Heart right ventricle (tissue), 16 donors: ENCODE measurements at regions of chr7 and their contacts with region 1.

Region 1: GRCh38 chr7:32070406-32071360 is at the start of gene PDE1C:
- DNase-seq: peak; percentile 75 to 78
- ATAC-seq: peak; percentile 78 to 93 (median 83)
- H3K4me3 ChIP-seq: peak within 1 kb of the TSS; percentile 44 to 70 (median 58)
- H3K27ac ChIP-seq: peak within 1 kb of the TSS; percentile 82 to 94 (median 90)
- H3K4me1 ChIP-seq: peaks cover 3 to 50% (median 27%) of the 10 kb centered on the region in 9 donors
- H3K27me3 ChIP-seq: peaks cover 0 to 48% (median 4%) of the 10 kb centered on the region in 7 donors
- CTCF ChIP-seq: no peak
- total RNA-seq, gene PDE1C: 124 to 315 (median 197) TPM

Region 2: GRCh38 chr7:32147546-32148268 is 77.0 kb after region 1 on chr7:
- intact Hi-C with region 1: loop called in 4 of 10 experiments (anchors 2 to 10 kb)
- DNase-seq: no peak
- ATAC-seq: no peak
- H3K4me3 ChIP-seq: no peak overlapping the region
- H3K27ac ChIP-seq: peak overlapping the region in 1 of 10 donors; percentile 63
- H3K4me1 ChIP-seq: peaks cover 0 to 41% (median 11%) of the 10 kb centered on the region in 9 donors
- H3K27me3 ChIP-seq: no peaks in the 10 kb centered on the region
- CTCF ChIP-seq: no peak

Region 3: DNA sequence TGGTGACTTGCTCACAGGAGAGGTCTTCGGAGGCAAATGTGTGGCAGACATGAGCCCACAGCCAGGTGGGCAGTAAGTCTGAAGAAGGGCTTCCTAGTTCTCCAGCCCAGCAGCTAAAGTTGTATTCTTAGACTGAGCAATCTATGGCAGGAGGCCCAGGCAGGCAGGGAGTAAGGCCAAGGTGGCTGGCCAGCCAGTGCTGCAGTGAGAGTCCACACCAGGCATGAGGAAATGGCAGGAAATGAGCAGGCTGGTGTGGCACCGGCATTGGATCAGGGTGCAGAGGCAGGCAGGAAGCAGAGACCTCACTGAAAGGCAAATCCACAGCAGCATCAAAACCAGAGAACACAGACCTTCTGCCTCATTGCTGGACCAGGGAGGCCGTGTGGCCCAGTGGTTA is 84.1 kb after region 1 on chr7:
- intact Hi-C with region 1: loop called in 6 of 10 experiments (anchors 2 to 10 kb)
- DNase-seq: peak; percentile 67 to 76
- ATAC-seq: peak; percentile 56 to 89 (median 84)
- H3K4me3 ChIP-seq: no peak overlapping the region
- H3K27ac ChIP-seq: peak overlapping the region in 9 of 10 donors; percentile 11 to 87 (median 81)
- H3K4me1 ChIP-seq: peaks cover 0 to 76% (median 40%) of the 10 kb centered on the region in 9 donors
- H3K27me3 ChIP-seq: no peaks in the 10 kb centered on the region
- CTCF ChIP-seq: no peak

Region 4: GRCh38 chr7:32164346-32164957 is 93.8 kb after region 1 on chr7:
- intact Hi-C with region 1: loop called in 7 of 10 experiments (anchors 5 to 10 kb)
- DNase-seq: peak in 1 of 2 donors; percentile 50
- ATAC-seq: peak; percentile 36 to 80 (median 76)
- H3K4me3 ChIP-seq: no peak overlapping the region
- H3K27ac ChIP-seq: peak overlapping the region in 7 of 10 donors; percentile 51 to 88 (median 75)
- H3K4me1 ChIP-seq: peaks cover 9 to 37% (median 27%) of the 10 kb centered on the region in 9 donors
- H3K27me3 ChIP-seq: no peaks in the 10 kb centered on the region
- CTCF ChIP-seq: peak; percentile 22 to 65 (median 50)